ENCODE measurements at regions of chr11 and their contacts with region 1.

Region 1: GRCh38 chr11:39165021-39165420 is 2294.4 kb downstream of the LRRC4C start:
- DNase-seq: no peak
- H3K4me3 ChIP-seq: no peak overlapping the region
- CTCF ChIP-seq: no peak
- POLR2A ChIP-seq: no peak

Region 2: DNA sequence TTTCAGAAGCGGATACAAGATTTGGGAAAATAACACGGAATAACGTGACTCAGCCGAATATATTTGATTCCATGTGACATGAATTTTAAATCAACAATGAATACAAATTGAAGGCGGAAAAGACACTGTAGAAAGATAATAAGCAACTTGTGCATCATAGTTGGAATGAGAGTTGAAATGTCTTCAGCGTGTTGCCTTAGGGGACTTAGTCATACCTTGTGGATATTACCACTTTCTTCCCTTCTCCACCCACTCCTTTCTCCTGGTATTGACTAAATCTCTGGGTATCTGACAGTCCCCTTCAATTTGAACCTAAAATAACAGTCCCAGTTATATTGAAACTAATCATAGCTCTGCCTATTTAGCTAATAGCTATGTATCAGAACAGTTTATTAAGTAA is 193.9 kb before region 1 on chr11:
- intact Hi-C with region 1: no loop called
- DNase-seq: no peak
- H3K4me3 ChIP-seq: no peak overlapping the region
- CTCF ChIP-seq: no peak
- POLR2A ChIP-seq: no peak

Region 3: GRCh38 chr11:40293655-40294348 is 1128.8 kb after region 1 on chr11:
- intact Hi-C with region 1: loop called (anchors 10 kb)
- DNase-seq: peak; percentile 35 to 87
- H3K4me3 ChIP-seq: peak overlapping the region; percentile 18
- CTCF ChIP-seq: no peak
- POLR2A ChIP-seq: no peak

Measured in lower leg skin (tissue), 4 donors.